ENCODE measurements at regions of chr12 and their contacts with region 1.

Region 1: GRCh38 chr12:81450920-81451739 is 308.0 kb downstream of the PPFIA2 start:
- H3K4me3 ChIP-seq: no peak overlapping the region
- H3K27ac ChIP-seq: no peak overlapping the region
- H3K4me1 ChIP-seq: no peaks in the 10 kb centered on the region
- CTCF ChIP-seq: peak; percentile 27; the same call in 1 of the 2 replicates

Region 2: GRCh38 chr12:81627336-81628189 is 176.4 kb after region 1 on chr12:
- CTCF ChIA-PET with region 1: interaction called, 26 read pairs
- POLR2A ChIA-PET with region 1: no interaction called
- H3K4me3 ChIP-seq: no peak overlapping the region
- H3K27ac ChIP-seq: no peak overlapping the region
- H3K4me1 ChIP-seq: no peaks in the 10 kb centered on the region
- CTCF ChIP-seq: no peak